ENCODE measurements at regions of chr19 and their contacts with region 1.

Region 1: GRCh38 chr19:1113033-1113985 is 9.5 kb downstream of the GPX4 start:
- DNase-seq: peak; percentile 100
- H3K4me3 ChIP-seq: no peak overlapping the region; a peak in 1 of 4 replicates
- H3K27ac ChIP-seq: peak overlapping the region; percentile 32 to 79; a peak in 3 of 4 replicates
- H3K4me1 ChIP-seq: peaks cover 5 to 7% of the 10 kb centered on the region in 2 experiments; a peak in 2 of 4 replicates
- H3K27me3 ChIP-seq: no peaks in the 10 kb centered on the region
- CTCF ChIP-seq: peak; percentile 84
- EP300 ChIP-seq: no peak
- RAD21 ChIP-seq: peak; percentile 78

Region 2: DNA sequence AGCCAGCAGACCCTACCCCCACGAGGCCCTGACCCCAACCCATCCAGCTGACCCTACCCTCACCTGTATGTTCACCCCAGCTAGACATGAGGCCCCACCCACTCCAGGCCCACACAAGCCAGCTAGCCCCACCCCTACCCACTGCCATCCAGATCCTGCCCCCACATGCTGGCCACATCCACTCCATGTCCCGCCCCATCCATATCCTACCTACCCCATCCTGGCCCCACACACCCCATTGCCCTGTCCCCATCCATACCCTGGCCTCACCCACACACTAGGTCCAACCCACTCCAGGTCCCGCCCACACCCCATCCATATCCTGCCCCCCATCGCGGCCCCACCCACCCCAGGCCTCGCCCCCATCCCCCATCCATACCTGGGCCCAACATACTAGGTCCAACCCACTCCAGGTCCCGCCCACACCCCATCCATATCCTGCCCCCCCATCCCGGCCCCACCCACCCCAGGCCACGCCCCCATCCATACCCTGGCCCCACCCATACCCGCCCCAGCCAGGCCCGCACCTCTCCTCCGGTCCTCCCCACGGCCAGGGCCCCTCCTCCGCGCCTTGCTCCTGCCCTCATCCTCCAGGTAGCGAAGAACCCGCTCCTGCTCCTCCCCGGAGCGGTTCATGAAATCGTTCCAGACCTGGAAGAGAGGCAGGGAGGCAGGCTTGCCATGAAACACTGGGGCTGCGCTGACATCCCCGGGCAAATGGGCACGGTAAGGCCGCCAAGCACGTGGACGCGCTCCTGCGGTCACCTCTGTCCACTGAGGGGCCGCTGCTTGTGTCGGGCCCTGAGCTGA is 212.8 kb before region 1 on chr19:
- CTCF ChIA-PET with region 1: no interaction called
- POLR2A ChIA-PET with region 1: no interaction called
- DNase-seq: peak; percentile 87
- H3K4me3 ChIP-seq: no peak overlapping the region
- H3K27ac ChIP-seq: no peak overlapping the region
- H3K4me1 ChIP-seq: no peaks in the 10 kb centered on the region; a peak in 1 of 4 replicates
- H3K27me3 ChIP-seq: no peaks in the 10 kb centered on the region
- CTCF ChIP-seq: no peak
- EP300 ChIP-seq: no peak
- RAD21 ChIP-seq: no peak

Region 3: GRCh38 chr19:1087813-1088415 is 25.4 kb before region 1 on chr19:
- CTCF ChIA-PET with region 1: interaction called, 16 read pairs
- POLR2A ChIA-PET with region 1: no interaction called
- DNase-seq: no peak
- H3K4me3 ChIP-seq: no peak overlapping the region
- H3K27ac ChIP-seq: no peak overlapping the region
- H3K4me1 ChIP-seq: peaks cover 0 to 3% of the 10 kb centered on the region in 2 experiments; a peak in 1 of 4 replicates
- H3K27me3 ChIP-seq: no peaks in the 10 kb centered on the region
- CTCF ChIP-seq: no peak
- EP300 ChIP-seq: no peak
- RAD21 ChIP-seq: no peak

Region 4: GRCh38 chr19:1173845-1174809 is 60.8 kb after region 1 on chr19 and contains the start of gene SBNO2:
- CTCF ChIA-PET with region 1: interaction called, 23 read pairs
- POLR2A ChIA-PET with region 1: no interaction called
- DNase-seq: peak; percentile 100
- H3K4me3 ChIP-seq: peak within 1 kb of the TSS; percentile 69 to 84
- H3K27ac ChIP-seq: peak within 1 kb of the TSS; percentile 57 to 69
- H3K4me1 ChIP-seq: peaks cover 26 to 32% of the 10 kb centered on the region in 2 experiments; a peak in 3 of 4 replicates
- H3K27me3 ChIP-seq: no peaks in the 10 kb centered on the region
- CTCF ChIP-seq: no peak
- EP300 ChIP-seq: no peak
- RAD21 ChIP-seq: no peak
- polyA plus RNA-seq, gene SBNO2: 15.7 and 18.3 TPM in 2 replicates

Region 5: GRCh38 chr19:1205114-1206062 is 92.1 kb after region 1 on chr19 and contains the start of gene STK11:
- CTCF ChIA-PET with region 1: interaction called, 40 read pairs
- POLR2A ChIA-PET with region 1: no interaction called
- DNase-seq: peak; percentile 99
- H3K4me3 ChIP-seq: peak within 1 kb of the TSS; percentile 65 to 85
- H3K27ac ChIP-seq: peak within 1 kb of the TSS; percentile 47 to 49; a peak in 3 of 4 replicates
- H3K4me1 ChIP-seq: peaks cover 8 to 30% of the 10 kb centered on the region in 2 experiments; a peak in 1 of 4 replicates
- H3K27me3 ChIP-seq: no peaks in the 10 kb centered on the region
- CTCF ChIP-seq: no peak
- EP300 ChIP-seq: no peak
- RAD21 ChIP-seq: no peak
- polyA plus RNA-seq, gene STK11: 53.5 and 55.5 TPM in 2 replicates

Region 6: DNA sequence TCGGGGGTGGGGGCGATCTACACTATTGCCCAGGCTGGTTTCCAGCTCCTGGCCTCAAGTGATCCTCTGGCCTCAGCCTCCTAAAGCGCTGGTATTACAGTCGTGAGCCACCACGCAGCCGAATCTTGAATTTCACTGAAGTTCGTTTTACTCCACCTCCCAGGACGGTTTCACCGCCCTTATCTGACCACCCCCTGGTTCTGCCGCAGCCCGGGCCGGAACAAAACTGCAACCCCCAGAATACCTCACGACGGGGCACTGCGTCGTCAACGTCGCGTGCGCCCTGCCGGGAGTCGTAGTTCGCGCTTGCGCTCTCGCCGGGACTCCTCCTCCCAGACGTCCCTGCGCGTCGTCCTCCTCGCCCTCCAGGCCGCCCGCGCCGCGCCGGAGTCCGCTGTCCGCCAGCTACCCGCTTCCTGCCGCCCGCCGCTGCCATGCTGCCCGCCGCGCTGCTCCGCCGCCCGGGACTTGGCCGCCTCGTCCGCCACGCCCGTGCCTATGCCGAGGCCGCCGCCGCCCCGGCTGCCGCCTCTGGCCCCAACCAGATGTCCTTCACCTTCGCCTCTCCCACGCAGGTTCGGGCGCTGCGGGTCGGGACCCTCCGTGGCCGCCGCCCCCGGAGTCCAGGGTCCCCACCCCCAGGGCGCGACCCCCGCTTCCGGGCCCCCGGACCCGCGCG is 128.2 kb after region 1 on chr19 and contains the start of gene ATP5F1D:
- CTCF ChIA-PET with region 1: interaction called, 17 read pairs
- POLR2A ChIA-PET with region 1: no interaction called
- DNase-seq: peak; percentile 93
- H3K4me3 ChIP-seq: peak within 1 kb of the TSS; percentile 85 to 91
- H3K27ac ChIP-seq: peak within 1 kb of the TSS; percentile 55 to 83
- H3K4me1 ChIP-seq: peaks cover 22 to 51% of the 10 kb centered on the region in 2 experiments; a peak in 3 of 4 replicates
- H3K27me3 ChIP-seq: no peaks in the 10 kb centered on the region
- CTCF ChIP-seq: no peak
- EP300 ChIP-seq: no peak
- RAD21 ChIP-seq: no peak
- polyA plus RNA-seq, gene ATP5F1D: 133 and 226 TPM in 2 replicates

Region 7: DNA sequence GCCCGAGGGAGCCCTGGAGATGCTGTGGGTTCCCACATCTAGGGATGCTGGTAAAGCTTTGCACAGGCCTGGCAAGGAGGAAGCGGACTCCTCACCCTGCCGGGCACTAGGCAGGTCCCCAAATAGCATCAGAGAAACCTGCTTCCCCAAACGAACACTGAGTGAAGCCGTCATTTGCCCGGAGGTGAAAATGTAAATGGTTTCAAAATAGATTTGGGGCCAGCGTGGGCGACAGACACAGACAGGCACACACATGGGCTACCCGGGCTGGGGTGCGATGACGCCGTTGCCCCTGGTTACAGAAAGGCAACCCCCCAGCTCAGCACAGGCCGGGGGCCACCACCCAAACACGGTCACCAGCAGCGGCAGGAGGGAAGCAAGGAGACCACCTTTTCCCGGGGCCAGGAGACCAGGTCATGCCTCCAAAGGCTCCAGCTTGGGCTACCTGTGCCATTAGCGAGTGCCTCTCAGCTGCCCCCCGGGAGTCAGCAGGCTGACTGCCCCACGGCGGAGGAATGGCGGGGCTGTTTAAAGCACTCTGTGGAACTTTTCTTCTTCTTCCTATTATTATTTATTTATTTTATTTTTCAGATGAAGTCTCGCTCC is 222.9 kb after region 1 on chr19:
- CTCF ChIA-PET with region 1: no interaction called
- POLR2A ChIA-PET with region 1: no interaction called
- DNase-seq: no peak
- H3K4me3 ChIP-seq: no peak overlapping the region
- H3K27ac ChIP-seq: no peak overlapping the region
- H3K4me1 ChIP-seq: no peaks in the 10 kb centered on the region
- H3K27me3 ChIP-seq: no peaks in the 10 kb centered on the region
- CTCF ChIP-seq: no peak
- EP300 ChIP-seq: no peak
- RAD21 ChIP-seq: no peak